Endothelial cell of umbilical vein (primary cell): ENCODE measurements at regions of chr2 and their contacts with region 1.

Region 1: DNA sequence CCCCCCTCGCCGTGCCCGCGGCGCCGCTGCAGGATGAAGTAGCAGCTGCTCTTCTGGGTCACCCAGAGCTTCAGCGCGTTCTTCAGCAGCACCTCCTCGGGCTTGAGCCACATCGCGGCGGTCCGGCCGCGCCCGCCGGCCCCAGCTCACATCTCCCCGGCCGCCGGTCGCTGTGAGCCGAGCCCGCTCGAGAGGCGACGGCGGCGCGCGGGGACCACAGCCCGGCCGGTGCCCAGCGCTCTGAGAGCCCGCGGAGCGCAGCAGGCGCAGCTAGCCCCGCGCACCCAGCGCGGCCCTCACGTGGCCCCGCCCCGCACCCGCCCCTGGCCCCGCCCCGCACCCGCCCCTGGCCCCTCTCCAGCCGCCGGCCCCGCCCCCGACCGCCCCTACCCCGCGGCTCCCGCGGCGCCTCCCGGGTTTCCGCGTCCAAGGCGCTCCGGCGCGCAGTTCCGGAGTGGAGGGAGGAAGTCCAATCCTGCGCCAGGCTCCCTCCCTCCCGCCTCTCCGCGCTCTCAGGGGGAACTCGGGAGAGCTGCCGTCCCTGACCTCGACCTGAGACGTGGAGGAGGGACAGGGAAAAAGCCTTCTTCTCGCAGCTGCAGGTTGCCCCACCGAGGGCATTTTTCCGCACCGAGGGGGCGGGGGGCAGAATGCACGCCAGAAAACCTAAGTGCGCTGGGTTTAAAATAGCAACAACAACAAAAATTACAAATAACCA is at the start of gene TBC1D8:
- DNase-seq: peak; percentile 75
- H3K4me3 ChIP-seq: peak within 1 kb of the TSS; percentile 56 to 89 (median 87)
- H3K27ac ChIP-seq: peak within 1 kb of the TSS; percentile 68
- H3K4me1 ChIP-seq: peaks cover 37% of the 10 kb centered on the region
- H3K27me3 ChIP-seq: no peaks in the 10 kb centered on the region
- CTCF ChIP-seq: no peak
- POLR2A ChIP-seq: peak; percentile 94
- total RNA-seq, gene TBC1D8: 30.6 and 32.1 TPM in 2 replicates

Region 2: DNA sequence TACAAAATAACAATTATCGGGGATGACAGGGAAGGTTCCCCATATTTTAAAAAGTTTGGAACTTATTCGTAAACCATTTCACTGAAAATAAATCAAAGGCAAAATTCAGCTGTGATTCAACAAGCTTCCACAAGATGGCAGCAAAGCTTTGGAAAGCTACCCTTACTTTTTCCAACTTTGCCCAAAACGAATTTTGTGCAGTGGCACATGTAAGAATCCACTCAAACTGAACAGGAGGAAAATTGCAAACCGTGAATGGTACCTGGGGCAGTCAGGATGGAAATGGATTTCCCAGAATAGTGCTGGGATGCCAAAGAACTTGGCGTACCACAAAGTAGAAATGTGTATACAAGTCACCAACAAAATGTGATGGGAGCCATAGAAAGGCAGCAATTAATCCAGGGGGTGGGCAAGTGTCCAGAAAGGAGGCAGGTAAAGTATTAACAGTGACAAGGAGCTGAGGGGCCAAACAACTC is 138.6 kb before region 1 on chr2:
- CTCF ChIA-PET with region 1: interaction called, 35 read pairs
- POLR2A ChIA-PET with region 1: no interaction called
- dilution Hi-C with region 1: no loop called
- intact Hi-C with region 1: loop called (anchors 1 kb)
- DNase-seq: peak; percentile 56
- H3K4me3 ChIP-seq: no peak overlapping the region
- H3K27ac ChIP-seq: no peak overlapping the region
- H3K4me1 ChIP-seq: no peaks in the 10 kb centered on the region
- H3K27me3 ChIP-seq: no peaks in the 10 kb centered on the region
- CTCF ChIP-seq: peak; percentile 57 to 72
- POLR2A ChIP-seq: no peak

Region 3: GRCh38 chr2:101030863-101031554 is 120.3 kb before region 1 on chr2:
- CTCF ChIA-PET with region 1: interaction called, 210 read pairs
- POLR2A ChIA-PET with region 1: no interaction called
- dilution Hi-C with region 1: no loop called
- intact Hi-C with region 1: loop called (anchors 1 kb)
- DNase-seq: no peak
- H3K4me3 ChIP-seq: no peak overlapping the region
- H3K27ac ChIP-seq: no peak overlapping the region
- H3K4me1 ChIP-seq: no peaks in the 10 kb centered on the region
- H3K27me3 ChIP-seq: no peaks in the 10 kb centered on the region
- CTCF ChIP-seq: no peak
- POLR2A ChIP-seq: no peak

Region 4: GRCh38 chr2:101036562-101037457 is 114.5 kb before region 1 on chr2:
- CTCF ChIA-PET with region 1: interaction called, 210 read pairs
- POLR2A ChIA-PET with region 1: no interaction called
- dilution Hi-C with region 1: no loop called
- intact Hi-C with region 1: loop called (anchors 1 kb)
- DNase-seq: peak; percentile 53
- H3K4me3 ChIP-seq: no peak overlapping the region
- H3K27ac ChIP-seq: no peak overlapping the region
- H3K4me1 ChIP-seq: no peaks in the 10 kb centered on the region
- H3K27me3 ChIP-seq: no peaks in the 10 kb centered on the region
- CTCF ChIP-seq: peak; percentile 24 to 40
- POLR2A ChIP-seq: no peak

Region 5: GRCh38 chr2:101109451-101110118 is 41.7 kb before region 1 on chr2:
- CTCF ChIA-PET with region 1: interaction called, 3 read pairs
- POLR2A ChIA-PET with region 1: no interaction called
- dilution Hi-C with region 1: no loop called
- intact Hi-C with region 1: loop called (anchors 1 kb)
- DNase-seq: peak; percentile 90
- H3K4me3 ChIP-seq: peak overlapping the region in 1 of 3 experiments; percentile 6
- H3K27ac ChIP-seq: peak overlapping the region; percentile 66
- H3K4me1 ChIP-seq: peaks cover 24% of the 10 kb centered on the region
- H3K27me3 ChIP-seq: no peaks in the 10 kb centered on the region
- CTCF ChIP-seq: no peak
- POLR2A ChIP-seq: no peak

Region 6: DNA sequence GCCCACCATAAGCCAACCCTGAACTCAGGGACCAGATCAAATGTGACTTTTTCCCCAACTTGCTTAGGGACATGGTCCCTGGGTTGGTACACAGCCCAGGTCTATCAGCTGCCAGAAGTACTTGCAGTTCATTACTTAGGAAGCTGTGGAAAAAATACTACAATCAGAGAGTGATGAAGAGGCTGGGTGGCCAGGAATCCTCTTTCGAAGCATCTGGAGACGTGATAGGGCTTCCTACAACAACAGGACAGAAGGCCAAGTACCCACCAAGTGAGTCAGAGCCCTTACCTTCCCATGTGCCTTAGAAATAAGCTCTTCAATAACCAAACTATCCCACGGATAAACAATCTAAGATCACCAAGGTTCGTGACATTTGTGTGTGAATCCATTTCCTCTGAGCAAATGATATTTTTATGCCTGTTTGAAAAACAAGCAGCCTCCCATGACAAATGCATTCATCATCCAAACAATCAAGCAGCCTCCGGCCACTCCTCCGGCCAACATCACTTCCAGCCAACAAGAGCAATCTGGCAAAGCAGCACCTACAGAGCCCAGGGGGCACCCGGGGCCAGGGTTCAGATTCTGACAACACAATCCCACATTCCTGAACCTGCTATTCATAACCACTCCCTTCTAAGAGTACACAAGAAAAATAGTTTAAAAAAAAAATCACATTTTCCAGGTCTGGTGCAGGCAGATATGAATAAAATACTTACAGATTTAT is 26.5 kb before region 1 on chr2:
- CTCF ChIA-PET with region 1: interaction called, 8 read pairs
- POLR2A ChIA-PET with region 1: interaction called, 12 read pairs
- dilution Hi-C with region 1: no loop called
- intact Hi-C with region 1: loop called (anchors 1 kb)
- DNase-seq: peak; percentile 98
- H3K4me3 ChIP-seq: peak overlapping the region in 1 of 3 experiments; percentile 24
- H3K27ac ChIP-seq: peak overlapping the region; percentile 99
- H3K4me1 ChIP-seq: peaks cover 66% of the 10 kb centered on the region
- H3K27me3 ChIP-seq: no peaks in the 10 kb centered on the region
- CTCF ChIP-seq: no peak
- POLR2A ChIP-seq: peak; percentile 51

Region 7: DNA sequence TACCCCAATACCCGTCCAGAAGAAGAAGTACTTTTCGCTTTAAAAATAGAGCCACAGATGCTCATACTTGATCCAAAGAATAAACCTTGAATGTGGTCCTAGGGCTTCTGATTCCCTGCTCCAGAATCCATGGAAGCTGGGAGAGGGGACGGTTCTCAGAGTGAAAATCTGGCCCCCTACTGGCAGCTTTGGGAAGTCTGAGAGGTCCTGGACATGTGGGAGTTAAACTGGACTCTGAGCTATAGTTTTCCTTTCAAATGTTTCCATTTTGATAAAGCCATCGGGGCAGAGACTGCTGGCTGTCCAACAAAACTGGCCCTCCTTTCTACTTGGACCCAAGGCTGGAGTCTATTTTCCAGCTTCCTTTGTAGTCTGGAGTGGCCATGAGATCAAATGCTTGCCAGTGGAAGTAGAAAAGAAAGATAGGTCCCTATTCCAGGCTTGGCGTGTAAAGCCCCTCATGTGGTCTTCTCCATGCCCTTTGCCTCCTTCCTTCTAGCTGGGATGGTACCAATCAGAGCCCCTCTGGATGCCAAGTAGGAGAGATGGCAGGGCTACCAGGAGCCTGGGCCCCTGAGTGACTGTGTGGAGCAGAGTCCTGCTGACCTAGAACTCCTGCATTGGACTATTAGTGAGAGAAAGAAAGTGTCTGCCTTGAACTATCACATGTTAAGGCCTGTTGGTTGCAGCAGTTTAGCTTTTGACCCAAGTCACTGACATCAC is 37.5 kb after region 1 on chr2:
- CTCF ChIA-PET with region 1: interaction called, 10 read pairs
- POLR2A ChIA-PET with region 1: interaction called, 5 read pairs
- dilution Hi-C with region 1: no loop called
- intact Hi-C with region 1: no loop called
- DNase-seq: peak; percentile 41
- H3K4me3 ChIP-seq: no peak overlapping the region
- H3K27ac ChIP-seq: no peak overlapping the region
- H3K4me1 ChIP-seq: no peaks in the 10 kb centered on the region
- H3K27me3 ChIP-seq: peaks cover 0 to 2% of the 10 kb centered on the region in 2 experiments
- CTCF ChIP-seq: peak; percentile 74 to 78
- POLR2A ChIP-seq: no peak